ENCODE measurements at regions of chr19 and their contacts with region 1.

Region 1: DNA sequence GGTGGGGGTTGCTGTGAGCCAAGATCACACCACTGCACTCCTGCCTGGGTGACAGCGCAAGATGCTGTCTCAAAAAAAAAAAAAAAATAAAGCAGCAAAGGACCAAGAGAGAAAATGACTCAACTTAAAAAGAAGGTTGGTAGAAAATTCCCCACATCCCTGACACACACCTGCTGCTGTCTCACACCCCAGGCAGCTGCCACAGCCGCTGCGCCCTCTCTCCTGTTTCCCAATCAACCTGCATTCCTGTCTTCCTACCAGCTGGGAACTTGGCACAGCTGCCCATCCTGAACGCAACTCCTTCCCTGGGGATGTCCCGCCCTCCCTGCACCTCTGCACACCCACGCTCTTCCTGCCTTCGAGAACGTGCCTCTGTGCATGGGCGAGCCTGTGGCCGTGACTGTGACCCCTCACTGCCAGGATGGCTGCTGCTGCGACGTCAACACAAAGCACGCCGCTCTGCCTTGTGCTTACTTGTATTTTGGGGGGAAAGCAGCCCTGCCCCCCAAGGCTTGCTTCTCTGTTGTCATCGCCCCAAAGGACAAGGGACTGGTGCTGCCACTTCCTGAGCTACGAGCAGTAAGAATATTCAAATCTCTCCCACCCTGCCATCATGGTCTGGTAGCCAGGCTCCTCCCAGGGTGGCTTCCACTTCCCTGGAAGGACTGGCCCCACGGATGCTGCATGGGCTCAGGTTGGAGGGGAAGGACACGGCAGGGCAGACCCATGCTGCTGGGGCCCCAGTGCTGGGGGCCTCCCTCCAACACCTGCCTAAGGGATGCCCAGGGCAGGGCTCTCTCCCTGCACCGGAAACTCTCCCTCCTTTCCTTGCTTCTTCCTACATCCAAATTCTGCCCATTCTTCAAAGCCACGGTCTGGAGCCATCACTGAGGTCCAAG is 20.7 kb downstream of the SH3GL1 start:
- DNase-seq: peak in 1 of 2 donors; percentile 91
- H3K4me3 ChIP-seq: peak overlapping the region in 2 of 3 donors; percentile 16 to 47
- H3K27ac ChIP-seq: peak overlapping the region; percentile 80 to 88
- H3K4me1 ChIP-seq: peaks cover 18 to 41% of the 10 kb centered on the region in 2 donors
- H3K27me3 ChIP-seq: no peaks in the 10 kb centered on the region
- CTCF ChIP-seq: no peak
- POLR2A ChIP-seq: no peak

Region 2: DNA sequence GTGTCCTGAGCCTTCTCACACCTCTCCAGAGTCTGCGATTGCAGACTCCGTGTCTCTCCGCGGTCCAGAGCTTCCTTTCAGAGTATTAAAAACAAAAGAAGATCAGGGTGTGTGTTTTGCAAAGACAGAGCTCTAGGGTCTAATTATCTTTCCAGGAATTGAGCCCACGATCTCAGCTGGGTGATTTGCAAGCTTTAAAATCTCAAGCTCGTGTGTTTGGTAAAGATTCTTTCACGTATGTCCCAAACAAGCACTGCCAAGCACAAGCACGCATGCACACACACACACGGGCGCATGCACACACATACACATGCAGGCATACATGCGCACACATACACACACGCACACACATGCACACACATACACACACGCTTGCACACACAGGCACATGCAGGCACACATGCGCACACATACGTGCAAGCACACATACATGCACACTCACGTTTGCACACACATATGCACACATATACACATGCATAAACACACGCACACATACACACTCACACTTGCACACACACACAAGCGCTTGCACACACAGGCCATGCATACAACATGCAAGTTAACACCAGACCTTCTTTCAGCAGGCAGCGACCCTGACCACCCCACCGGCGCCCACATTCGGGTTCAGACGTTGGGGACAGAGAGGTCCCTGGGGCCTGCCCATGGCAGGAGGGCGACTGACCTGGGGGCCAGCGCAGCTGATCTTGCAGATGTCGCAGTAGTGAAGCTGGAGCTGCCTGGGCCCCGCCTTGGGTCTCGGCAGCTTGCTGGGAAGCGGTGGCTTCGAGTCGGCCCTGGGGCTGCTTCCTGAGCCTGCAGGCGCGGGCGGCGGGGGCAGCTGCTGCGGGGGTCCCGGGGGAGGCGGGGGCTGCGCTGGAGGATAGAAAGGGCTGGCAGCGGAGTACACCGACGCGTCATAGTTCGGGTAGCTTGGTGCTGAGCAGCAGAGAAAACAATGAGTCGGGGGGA is 548.7 kb before region 1 on chr19:
- intact Hi-C with region 1: no loop called
- DNase-seq: no peak
- H3K4me3 ChIP-seq: no peak overlapping the region
- H3K27ac ChIP-seq: no peak overlapping the region
- H3K4me1 ChIP-seq: no peaks in the 10 kb centered on the region
- H3K27me3 ChIP-seq: peaks cover 0 to 14% of the 10 kb centered on the region in 2 donors
- CTCF ChIP-seq: no peak
- POLR2A ChIP-seq: no peak

Region 3: DNA sequence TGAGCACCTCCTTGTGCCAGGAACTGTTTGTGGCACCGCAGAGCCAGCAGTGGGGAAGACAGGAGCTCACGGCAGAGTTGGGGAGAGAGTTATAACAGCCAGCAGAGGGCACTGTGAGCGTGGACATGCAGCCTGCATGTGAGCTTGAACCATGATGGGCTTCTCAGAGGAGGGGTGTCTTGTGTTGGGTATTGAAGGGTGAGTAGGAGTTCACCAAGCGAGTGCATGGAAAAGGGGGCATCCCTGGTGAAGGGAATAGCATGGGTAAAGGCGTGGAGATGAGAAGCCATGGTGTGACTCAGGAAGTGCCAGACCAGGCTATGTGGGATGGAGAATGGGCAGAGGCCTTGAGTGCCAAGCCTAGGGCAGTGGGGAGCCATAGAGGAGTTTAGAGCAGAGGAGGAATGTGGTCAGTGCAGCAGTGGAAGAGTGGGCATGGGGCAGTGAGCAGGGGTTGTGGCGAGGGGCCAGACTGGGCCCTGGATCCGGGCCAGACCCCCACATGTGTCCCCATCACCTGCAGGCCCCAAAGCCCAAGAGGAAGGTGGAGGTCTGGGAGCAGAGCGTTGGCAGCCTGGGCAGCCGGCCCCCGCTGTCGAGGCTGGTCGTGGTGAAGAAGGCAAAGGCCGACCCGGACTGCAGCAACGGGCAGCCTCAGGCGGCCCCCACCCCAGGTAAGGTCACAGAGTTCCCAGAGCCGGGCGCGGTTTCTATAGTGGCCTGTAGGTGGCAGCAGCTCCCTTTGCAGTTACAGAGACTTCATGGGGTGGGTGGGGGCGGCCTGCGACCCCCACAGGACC is 112.3 kb before region 1 on chr19:
- intact Hi-C with region 1: no loop called
- DNase-seq: peak in 1 of 2 donors; percentile 32
- H3K4me3 ChIP-seq: no peak overlapping the region
- H3K27ac ChIP-seq: peak overlapping the region in 1 of 2 donors; percentile 9
- H3K4me1 ChIP-seq: no peaks in the 10 kb centered on the region
- H3K27me3 ChIP-seq: no peaks in the 10 kb centered on the region
- CTCF ChIP-seq: peak; percentile 66 to 78 (median 74)
- POLR2A ChIP-seq: no peak

Region 4: GRCh38 chr19:4393947-4394590 is 14.5 kb after region 1 on chr19:
- intact Hi-C with region 1: loop called (anchors 1 kb)
- DNase-seq: no peak
- H3K4me3 ChIP-seq: no peak overlapping the region
- H3K27ac ChIP-seq: peak overlapping the region in 1 of 2 donors; percentile 33
- H3K4me1 ChIP-seq: peaks cover 30 to 33% of the 10 kb centered on the region in 2 donors
- H3K27me3 ChIP-seq: no peaks in the 10 kb centered on the region
- CTCF ChIP-seq: no peak
- POLR2A ChIP-seq: no peak

Region 5: DNA sequence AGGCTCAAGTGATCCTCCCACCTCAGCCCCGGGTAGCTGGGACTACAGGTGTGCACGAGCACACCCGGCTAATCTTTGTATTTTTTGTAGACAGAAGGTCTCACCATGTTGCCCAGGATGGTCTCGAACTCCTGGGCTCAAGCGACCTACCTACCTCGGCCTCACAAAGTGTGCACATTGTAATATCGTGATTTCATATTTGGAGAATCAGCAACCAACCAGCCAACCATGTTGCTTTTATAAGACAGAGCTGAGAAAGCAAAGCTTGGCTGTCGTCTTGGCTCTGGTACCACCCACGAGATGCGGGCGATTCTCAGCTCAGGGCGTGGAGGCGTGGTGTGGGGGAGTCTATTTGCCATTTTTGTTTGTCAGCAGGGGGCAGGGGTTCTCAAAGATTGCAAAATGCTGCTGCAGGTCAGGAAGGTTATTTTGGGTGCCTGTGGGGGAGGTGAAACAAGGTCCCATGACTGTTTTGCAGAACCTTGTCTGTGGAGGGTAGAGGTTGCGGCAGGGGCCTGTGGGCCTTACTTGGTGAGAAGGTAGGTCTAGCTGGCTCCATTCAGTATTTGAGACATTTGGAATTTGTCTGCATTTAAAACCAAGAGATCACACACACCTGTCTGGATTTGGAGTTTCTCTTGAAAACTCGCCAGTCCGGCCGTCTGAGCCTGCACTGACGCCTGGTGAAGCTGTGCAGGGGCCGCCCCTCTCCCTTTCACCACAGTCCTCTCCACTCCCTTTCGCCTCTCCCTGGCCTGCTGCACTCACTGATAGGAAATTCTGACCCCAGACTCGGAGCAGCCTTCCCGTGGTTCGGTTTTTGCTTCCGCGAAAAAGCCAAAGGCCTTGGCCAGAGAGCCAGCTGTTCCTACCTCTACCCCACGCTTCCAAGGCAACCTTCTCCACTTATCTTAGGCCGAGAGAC is 275.1 kb after region 1 on chr19:
- intact Hi-C with region 1: loop called (anchors 10 kb)
- DNase-seq: no peak
- H3K4me3 ChIP-seq: no peak overlapping the region
- H3K27ac ChIP-seq: no peak overlapping the region
- H3K4me1 ChIP-seq: no peaks in the 10 kb centered on the region
- H3K27me3 ChIP-seq: no peaks in the 10 kb centered on the region
- CTCF ChIP-seq: no peak
- POLR2A ChIP-seq: no peak